ENCODE measurements at regions of chr2 and their contacts with region 1.

Region 1: GRCh38 chr2:74178201-74179062 is at the start of gene MOB1A:
- DNase-seq: peak; percentile 93 to 99 (median 96)
- ATAC-seq: peak; percentile 93 to 96 (median 95)
- H3K4me3 ChIP-seq: peak within 1 kb of the TSS; percentile 76 to 89
- H3K4me3 Mint-ChIP-seq: peak within 1 kb of the TSS; percentile 85 to 89 (median 88)
- H3K27ac ChIP-seq: peak within 1 kb of the TSS; percentile 88
- H3K27ac Mint-ChIP-seq: peak within 1 kb of the TSS; percentile 87 to 95
- H3K4me1 ChIP-seq: peaks cover 15 to 30% of the 10 kb centered on the region in 2 experiments
- H3K4me1 Mint-ChIP-seq: peaks cover 34 to 43% (median 37%) of the 10 kb centered on the region in 3 donors
- H3K27me3 ChIP-seq: no peaks in the 10 kb centered on the region
- H3K27me3 Mint-ChIP-seq: no peaks in the 10 kb centered on the region
- total RNA-seq, gene MOB1A: 131 to 156 (median 138) TPM

Region 2: DNA sequence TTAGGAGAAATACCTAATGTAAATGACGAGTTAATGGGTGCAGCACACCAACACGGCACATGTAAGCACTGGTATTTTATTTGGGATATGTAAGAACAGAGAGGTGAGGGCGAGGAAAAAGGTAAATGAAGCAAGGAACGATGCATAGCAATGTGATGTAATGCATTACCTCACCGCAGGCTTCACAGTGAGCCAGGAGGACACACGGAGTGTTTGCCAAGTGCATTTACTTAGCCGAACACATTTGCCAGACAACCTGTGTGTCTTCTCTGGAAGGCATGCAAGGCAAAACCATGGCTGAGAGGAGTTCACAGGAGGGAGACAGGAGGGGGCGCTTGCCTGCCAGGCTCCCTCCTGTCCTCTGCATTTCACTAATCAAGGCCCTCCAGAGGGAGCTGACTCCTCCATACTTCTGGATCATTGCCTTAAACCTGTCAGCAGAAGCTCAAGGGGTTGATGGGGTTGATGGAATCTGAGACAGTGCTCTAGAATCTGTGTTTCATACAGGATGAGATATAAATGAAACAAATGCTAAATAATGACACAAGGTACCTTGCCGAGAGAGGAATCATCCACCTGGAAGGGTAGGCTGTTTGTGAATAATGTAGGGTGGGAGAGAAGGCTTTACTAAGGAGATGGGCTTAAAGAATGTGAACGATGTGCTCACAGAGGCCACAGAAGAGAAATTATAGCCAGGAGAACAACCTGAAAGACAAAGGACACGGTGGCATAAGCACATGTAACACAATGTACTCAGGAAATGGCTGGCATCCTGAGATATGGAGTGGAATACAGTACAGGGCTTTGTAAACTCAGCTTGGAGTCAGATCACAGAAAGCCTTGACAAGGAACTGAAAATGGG is 432.2 kb before region 1 on chr2:
- CTCF ChIA-PET with region 1: no interaction called
- POLR2A ChIA-PET with region 1: interaction called in 1 of 2 experiments, 10 read pairs
- DNase-seq: no peak
- ATAC-seq: no peak
- H3K4me3 ChIP-seq: no peak overlapping the region
- H3K4me3 Mint-ChIP-seq: no peak overlapping the region
- H3K27ac ChIP-seq: no peak overlapping the region
- H3K27ac Mint-ChIP-seq: no peak overlapping the region
- H3K4me1 ChIP-seq: no peaks in the 10 kb centered on the region
- H3K4me1 Mint-ChIP-seq: no peaks in the 10 kb centered on the region
- H3K27me3 ChIP-seq: no peaks in the 10 kb centered on the region
- H3K27me3 Mint-ChIP-seq: no peaks in the 10 kb centered on the region

Region 3: GRCh38 chr2:73828818-73829570 is 349.4 kb before region 1 on chr2 and contains the start of gene STAMBP:
- CTCF ChIA-PET with region 1: interaction called in 1 of 2 experiments, 12 read pairs
- POLR2A ChIA-PET with region 1: interaction called, 4 to 8 read pairs
- DNase-seq: peak; percentile 75 to 97 (median 83)
- ATAC-seq: peak; percentile 91 to 95 (median 94)
- H3K4me3 ChIP-seq: peak within 1 kb of the TSS; percentile 76 to 83
- H3K4me3 Mint-ChIP-seq: peak within 1 kb of the TSS; percentile 95 to 97 (median 96)
- H3K27ac ChIP-seq: peak within 1 kb of the TSS; percentile 94
- H3K27ac Mint-ChIP-seq: peak within 1 kb of the TSS; percentile 97 to 98
- H3K4me1 ChIP-seq: peaks cover 11 to 24% of the 10 kb centered on the region in 2 experiments
- H3K4me1 Mint-ChIP-seq: peaks cover 51 to 53% (median 52%) of the 10 kb centered on the region in 3 donors
- H3K27me3 ChIP-seq: no peaks in the 10 kb centered on the region
- H3K27me3 Mint-ChIP-seq: no peaks in the 10 kb centered on the region
- total RNA-seq, gene STAMBP: 21.6 to 32.5 (median 28.9) TPM

Region 4: GRCh38 chr2:74131901-74132300 is 46.5 kb before region 1 on chr2:
- CTCF ChIA-PET with region 1: no interaction called
- POLR2A ChIA-PET with region 1: no interaction called
- DNase-seq: no peak
- ATAC-seq: no peak
- H3K4me3 ChIP-seq: no peak overlapping the region
- H3K4me3 Mint-ChIP-seq: no peak overlapping the region
- H3K27ac ChIP-seq: no peak overlapping the region
- H3K27ac Mint-ChIP-seq: no peak overlapping the region
- H3K4me1 ChIP-seq: no peaks in the 10 kb centered on the region
- H3K4me1 Mint-ChIP-seq: no peaks in the 10 kb centered on the region
- H3K27me3 ChIP-seq: peaks cover 0 to 26% of the 10 kb centered on the region in 2 experiments
- H3K27me3 Mint-ChIP-seq: peaks cover 0 to 4% of the 10 kb centered on the region in 2 donors

Region 5: DNA sequence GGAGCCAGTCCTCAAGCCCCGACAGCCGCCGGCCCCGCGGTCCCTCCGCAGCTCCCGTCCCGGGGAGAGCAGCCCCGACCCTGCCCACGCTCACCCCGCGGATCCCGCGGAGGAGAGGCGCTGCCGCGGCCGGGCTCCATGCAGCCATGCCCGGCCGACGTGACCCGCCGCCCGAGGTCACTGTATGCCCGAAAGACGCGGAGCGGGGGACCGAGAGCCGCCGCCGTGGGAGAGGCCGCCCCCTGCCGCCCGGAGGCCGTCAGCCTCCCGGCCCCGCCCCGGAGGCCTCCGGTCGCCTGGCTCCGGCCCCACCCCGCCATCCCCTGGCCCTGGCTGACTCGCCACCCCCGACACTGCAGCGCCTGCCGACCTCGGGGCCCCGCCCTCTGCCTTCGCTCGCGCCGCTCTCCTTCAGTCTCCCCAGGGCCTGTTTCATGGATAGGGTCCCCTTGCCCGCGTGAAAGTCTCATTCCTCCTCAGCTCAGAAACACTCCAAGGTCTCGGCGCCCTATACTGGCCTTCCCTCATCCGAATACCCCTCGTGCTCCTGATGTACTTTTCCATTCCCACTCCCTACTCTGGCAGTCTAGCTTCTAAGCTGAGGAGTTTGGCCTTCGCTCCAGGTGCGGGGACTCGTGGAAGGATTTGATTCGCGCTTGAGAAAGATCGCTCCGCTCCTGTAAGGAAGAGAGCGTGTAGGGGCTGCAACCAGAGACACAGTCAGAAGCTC is 30.5 kb before region 1 on chr2 and contains the start of gene BOLA3:
- CTCF ChIA-PET with region 1: interaction called in 1 of 2 experiments, 11 read pairs
- POLR2A ChIA-PET with region 1: interaction called, 4 read pairs
- DNase-seq: peak; percentile 38 to 84 (median 63)
- ATAC-seq: peak; percentile 90 to 98 (median 97)
- H3K4me3 ChIP-seq: peak within 1 kb of the TSS; percentile 64 to 70
- H3K4me3 Mint-ChIP-seq: no peak within 1 kb of the TSS
- H3K27ac ChIP-seq: peak within 1 kb of the TSS; percentile 64
- H3K27ac Mint-ChIP-seq: no peak within 1 kb of the TSS
- H3K4me1 ChIP-seq: peaks cover 6 to 26% of the 10 kb centered on the region in 2 experiments
- H3K4me1 Mint-ChIP-seq: peaks cover 0 to 5% (median 0%) of the 10 kb centered on the region in 3 donors
- H3K27me3 ChIP-seq: no peaks in the 10 kb centered on the region
- H3K27me3 Mint-ChIP-seq: no peaks in the 10 kb centered on the region
- total RNA-seq, gene BOLA3: 13.7 to 16.0 (median 15.5) TPM

Region 6: DNA sequence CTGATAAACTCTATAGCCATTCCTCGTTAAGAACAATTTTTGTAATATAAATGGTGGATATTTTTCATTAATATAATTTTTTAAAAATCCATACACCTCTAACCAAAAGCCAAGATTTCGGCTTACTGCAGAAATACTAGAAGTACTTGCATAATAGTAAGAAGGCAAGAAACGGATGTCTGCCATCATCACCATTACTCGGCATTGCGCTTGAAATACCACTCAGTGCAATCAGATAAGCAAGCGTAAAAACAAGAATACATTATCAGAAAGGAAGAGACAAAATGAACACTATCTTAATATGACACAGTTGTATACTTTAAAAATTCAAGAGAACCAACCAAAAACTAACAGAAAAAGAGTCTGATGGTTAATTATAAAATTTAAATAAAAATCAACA is 15.5 kb before region 1 on chr2:
- CTCF ChIA-PET with region 1: interaction called, 4 to 14 read pairs
- POLR2A ChIA-PET with region 1: interaction called in 1 of 2 experiments, 11 read pairs
- DNase-seq: no peak
- ATAC-seq: no peak
- H3K4me3 ChIP-seq: no peak overlapping the region
- H3K4me3 Mint-ChIP-seq: no peak overlapping the region
- H3K27ac ChIP-seq: no peak overlapping the region
- H3K27ac Mint-ChIP-seq: no peak overlapping the region
- H3K4me1 ChIP-seq: no peaks in the 10 kb centered on the region
- H3K4me1 Mint-ChIP-seq: peaks cover 4 to 11% (median 8%) of the 10 kb centered on the region in 3 donors
- H3K27me3 ChIP-seq: no peaks in the 10 kb centered on the region
- H3K27me3 Mint-ChIP-seq: no peaks in the 10 kb centered on the region

Region 7: GRCh38 chr2:74198461-74199274 is 20.2 kb after region 1 on chr2 and contains the start of gene MTHFD2:
- CTCF ChIA-PET with region 1: interaction called, 4 to 27 read pairs
- POLR2A ChIA-PET with region 1: interaction called in 1 of 2 experiments, 4 read pairs
- DNase-seq: peak; percentile 73 to 93 (median 83)
- ATAC-seq: peak; percentile 89 to 91 (median 89)
- H3K4me3 ChIP-seq: peak within 1 kb of the TSS; percentile 69 to 72
- H3K4me3 Mint-ChIP-seq: peak within 1 kb of the TSS; percentile 92 to 99 (median 94)
- H3K27ac ChIP-seq: peak within 1 kb of the TSS; percentile 85
- H3K27ac Mint-ChIP-seq: peak within 1 kb of the TSS; percentile 100
- H3K4me1 ChIP-seq: peaks cover 10 to 21% of the 10 kb centered on the region in 2 experiments
- H3K4me1 Mint-ChIP-seq: peaks cover 33 to 37% (median 37%) of the 10 kb centered on the region in 3 donors
- H3K27me3 ChIP-seq: peaks cover 0 to 5% of the 10 kb centered on the region in 2 experiments
- H3K27me3 Mint-ChIP-seq: no peaks in the 10 kb centered on the region
- total RNA-seq, gene MTHFD2: 26.3 to 59.3 (median 47.9) TPM

Region 8: DNA sequence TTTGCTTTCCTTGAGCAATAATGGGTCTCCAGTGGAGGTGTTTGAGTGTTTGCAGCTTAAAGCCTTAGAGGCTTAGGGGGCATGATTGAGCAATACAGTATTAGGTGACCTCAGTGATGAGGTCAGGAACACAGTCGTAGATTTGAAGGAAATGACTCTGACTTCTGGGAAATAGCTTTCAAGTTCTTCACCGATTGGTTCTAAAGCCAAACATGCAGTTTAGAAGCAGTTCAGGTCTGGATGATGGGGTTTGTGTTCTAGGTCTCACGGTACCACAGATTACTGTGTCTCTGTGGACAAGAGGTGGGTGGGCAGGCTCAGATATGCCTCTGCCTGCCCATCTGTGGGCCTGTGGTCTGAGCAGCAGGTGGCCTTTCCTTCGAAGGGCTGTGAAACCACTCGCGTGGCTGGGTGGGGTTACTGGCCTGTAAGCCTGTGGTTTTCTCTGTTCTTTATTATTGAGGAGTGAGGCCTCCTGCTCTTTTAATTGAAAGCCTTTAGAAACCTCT is 27.8 kb after region 1 on chr2:
- CTCF ChIA-PET with region 1: interaction called, 4 to 19 read pairs
- POLR2A ChIA-PET with region 1: interaction called, 3 to 6 read pairs
- DNase-seq: peak in 27 of 35 experiments; percentile 10 to 69 (median 19)
- ATAC-seq: peak; percentile 71 to 90 (median 80)
- H3K4me3 ChIP-seq: peak overlapping the region in 1 of 2 donors; percentile 19
- H3K4me3 Mint-ChIP-seq: peak overlapping the region; percentile 72 to 73 (median 72)
- H3K27ac ChIP-seq: peak overlapping the region; percentile 89
- H3K27ac Mint-ChIP-seq: peak overlapping the region; percentile 95 to 97
- H3K4me1 ChIP-seq: peaks cover 12 to 31% of the 10 kb centered on the region in 2 experiments
- H3K4me1 Mint-ChIP-seq: peaks cover 30 to 49% (median 47%) of the 10 kb centered on the region in 3 donors
- H3K27me3 ChIP-seq: no peaks in the 10 kb centered on the region
- H3K27me3 Mint-ChIP-seq: no peaks in the 10 kb centered on the region

Region 9: GRCh38 chr2:74278176-74278575 is 99.7 kb after region 1 on chr2:
- CTCF ChIA-PET with region 1: no interaction called
- POLR2A ChIA-PET with region 1: no interaction called
- DNase-seq: no peak
- ATAC-seq: no peak
- H3K4me3 ChIP-seq: no peak overlapping the region
- H3K4me3 Mint-ChIP-seq: no peak overlapping the region
- H3K27ac ChIP-seq: no peak overlapping the region
- H3K27ac Mint-ChIP-seq: no peak overlapping the region
- H3K4me1 ChIP-seq: no peaks in the 10 kb centered on the region
- H3K4me1 Mint-ChIP-seq: no peaks in the 10 kb centered on the region
- H3K27me3 ChIP-seq: no peaks in the 10 kb centered on the region
- H3K27me3 Mint-ChIP-seq: no peaks in the 10 kb centered on the region

Region 10: GRCh38 chr2:74553892-74554645 is 375.6 kb after region 1 on chr2 and contains the start of gene LOXL3:
- CTCF ChIA-PET with region 1: no interaction called
- POLR2A ChIA-PET with region 1: no interaction called
- DNase-seq: peak in 28 of 35 experiments; percentile 20 to 85 (median 61)
- ATAC-seq: peak; percentile 43 to 71 (median 50)
- H3K4me3 ChIP-seq: peak within 1 kb of the TSS; percentile 96 to 97
- H3K4me3 Mint-ChIP-seq: peak within 1 kb of the TSS; percentile 86 to 94 (median 91)
- H3K27ac ChIP-seq: peak within 1 kb of the TSS; percentile 75
- H3K27ac Mint-ChIP-seq: peak within 1 kb of the TSS; percentile 75 to 85
- H3K4me1 ChIP-seq: peaks cover under 1 to 33% of the 10 kb centered on the region in 2 experiments
- H3K4me1 Mint-ChIP-seq: peaks cover 9 to 21% (median 19%) of the 10 kb centered on the region in 3 donors
- H3K27me3 ChIP-seq: peaks cover 0 to 31% of the 10 kb centered on the region in 2 experiments
- H3K27me3 Mint-ChIP-seq: peaks cover 19 to 27% of the 10 kb centered on the region in 2 donors
- total RNA-seq, gene LOXL3: 0.10 to 0.47 (median 0.38) TPM in 4 of 5 donors, not detected in the other